ENCODE measurements at regions of chr11 and their contacts with region 1.

Region 1: GRCh38 chr11:727859-728748 is 19.2 kb upstream of the TALDO1 start:
- DNase-seq: peak; percentile 52 to 86 (median 71)
- ATAC-seq: peak; percentile 93
- H3K4me3 ChIP-seq: no peak overlapping the region
- H3K4me3 Mint-ChIP-seq: no peak overlapping the region
- H3K27ac ChIP-seq: no peak overlapping the region
- H3K27ac Mint-ChIP-seq: no peak overlapping the region
- H3K4me1 ChIP-seq: peaks cover 11 to 17% of the 10 kb centered on the region in 2 donors
- H3K4me1 Mint-ChIP-seq: peaks cover 4 to 11% (median 8%) of the 10 kb centered on the region in 7 donors
- H3K27me3 ChIP-seq: no peaks in the 10 kb centered on the region
- H3K27me3 Mint-ChIP-seq: peaks cover 0 to 8% (median 4%) of the 10 kb centered on the region in 5 donors

Region 2: GRCh38 chr11:406978-407739 is 320.9 kb before region 1 on chr11:
- CTCF ChIA-PET with region 1: no interaction called
- POLR2A ChIA-PET with region 1: no interaction called
- intact Hi-C with region 1: loop called in 1 of 2 experiments (anchors 5 kb)
- DNase-seq: peak; percentile 80 to 93 (median 92)
- ATAC-seq: peak; percentile 90
- H3K4me3 ChIP-seq: no peak overlapping the region
- H3K4me3 Mint-ChIP-seq: peak overlapping the region in 6 of 10 donors; percentile 12 to 60 (median 38)
- H3K27ac ChIP-seq: peak overlapping the region; percentile 75
- H3K27ac Mint-ChIP-seq: peak overlapping the region in 7 of 9 donors; percentile 21 to 85 (median 51)
- H3K4me1 ChIP-seq: peaks cover 9 to 13% of the 10 kb centered on the region in 2 donors
- H3K4me1 Mint-ChIP-seq: peaks cover 4 to 21% (median 6%) of the 10 kb centered on the region in 7 donors
- H3K27me3 ChIP-seq: no peaks in the 10 kb centered on the region
- H3K27me3 Mint-ChIP-seq: no peaks in the 10 kb centered on the region

Region 3: GRCh38 chr11:554824-555472 is 173.2 kb before region 1 on chr11:
- CTCF ChIA-PET with region 1: interaction called, 41 read pairs
- POLR2A ChIA-PET with region 1: interaction called, 68 read pairs
- intact Hi-C with region 1: loop called (anchors 1 to 2 kb)
- DNase-seq: peak; percentile 60 to 80 (median 72)
- ATAC-seq: peak; percentile 89
- H3K4me3 ChIP-seq: peak overlapping the region; percentile 46
- H3K4me3 Mint-ChIP-seq: peak overlapping the region in 7 of 10 donors; percentile 36 to 69 (median 57)
- H3K27ac ChIP-seq: peak overlapping the region; percentile 44
- H3K27ac Mint-ChIP-seq: no peak overlapping the region
- H3K4me1 ChIP-seq: peaks cover 9 to 16% of the 10 kb centered on the region in 2 donors
- H3K4me1 Mint-ChIP-seq: peaks cover 3 to 8% (median 7%) of the 10 kb centered on the region in 7 donors
- H3K27me3 ChIP-seq: no peaks in the 10 kb centered on the region
- H3K27me3 Mint-ChIP-seq: peaks cover 0 to 18% (median 0%) of the 10 kb centered on the region in 5 donors

Region 4: DNA sequence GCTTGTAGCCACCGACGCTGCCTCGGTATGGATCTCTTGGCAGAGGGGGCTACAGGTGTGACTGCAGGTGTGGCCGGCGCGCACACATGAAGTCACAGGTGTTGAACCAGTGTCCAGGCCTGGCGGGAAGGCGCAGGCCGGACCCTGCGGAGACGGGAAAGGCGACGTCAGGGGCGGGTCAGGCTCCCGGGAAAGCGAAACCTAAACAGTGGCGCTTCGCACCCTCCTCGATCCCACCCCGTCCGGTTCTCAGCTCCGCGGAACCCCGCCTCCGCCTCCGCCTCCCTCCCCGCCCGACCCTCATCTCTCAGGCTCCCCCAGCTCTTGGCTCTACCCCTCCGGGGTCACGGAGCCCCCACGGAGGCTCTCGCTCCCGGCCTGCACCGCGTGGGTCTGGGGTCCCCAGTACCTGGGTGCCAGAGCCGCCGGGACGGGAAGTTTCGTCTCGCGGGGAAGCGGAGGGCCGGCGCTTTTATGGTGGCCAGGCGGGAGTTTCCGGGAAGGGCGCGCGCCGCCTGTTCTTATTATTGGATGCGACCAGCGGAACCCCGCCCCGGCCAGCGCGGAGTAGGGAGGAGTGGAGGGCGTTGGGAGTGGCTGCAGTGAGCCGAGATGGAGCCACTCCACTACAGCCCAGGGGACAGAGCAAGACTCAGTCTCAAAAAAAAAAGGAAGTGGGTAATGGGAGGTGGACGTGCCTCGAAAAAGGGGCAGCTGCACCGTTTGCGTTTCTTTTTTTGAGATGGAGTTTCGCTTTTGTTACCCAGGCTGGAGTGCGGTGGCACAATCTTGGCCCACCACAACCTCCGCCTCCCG is 112.4 kb before region 1 on chr11 and contains the start of gene IRF7:
- CTCF ChIA-PET with region 1: no interaction called
- POLR2A ChIA-PET with region 1: interaction called, 3 read pairs
- intact Hi-C with region 1: loop called in 1 of 2 experiments (anchors 1 kb)
- DNase-seq: peak; percentile 70 to 91 (median 76)
- ATAC-seq: peak; percentile 91
- H3K4me3 ChIP-seq: peak within 1 kb of the TSS; percentile 97
- H3K4me3 Mint-ChIP-seq: peak within 1 kb of the TSS; percentile 80 to 94 (median 92)
- H3K27ac ChIP-seq: peak within 1 kb of the TSS; percentile 95
- H3K27ac Mint-ChIP-seq: peak within 1 kb of the TSS; percentile 83 to 97 (median 93)
- H3K4me1 ChIP-seq: peaks cover 8 to 22% of the 10 kb centered on the region in 2 donors
- H3K4me1 Mint-ChIP-seq: peaks cover 0 to 22% (median 15%) of the 10 kb centered on the region in 7 donors
- H3K27me3 ChIP-seq: no peaks in the 10 kb centered on the region
- H3K27me3 Mint-ChIP-seq: no peaks in the 10 kb centered on the region
- total RNA-seq, gene IRF7: 57.0 to 134 (median 64.6) TPM

Region 5: GRCh38 chr11:747158-748006 is 19.3 kb after region 1 on chr11 and contains the start of gene TALDO1:
- CTCF ChIA-PET with region 1: interaction called, 6 read pairs
- POLR2A ChIA-PET with region 1: interaction called, 21 read pairs
- intact Hi-C with region 1: loop called (anchors 1 kb)
- DNase-seq: peak; percentile 54 to 96 (median 60)
- ATAC-seq: peak; percentile 92
- H3K4me3 ChIP-seq: peak within 1 kb of the TSS; percentile 67
- H3K4me3 Mint-ChIP-seq: peak within 1 kb of the TSS; percentile 80 to 93 (median 88)
- H3K27ac ChIP-seq: peak within 1 kb of the TSS; percentile 80
- H3K27ac Mint-ChIP-seq: peak within 1 kb of the TSS; percentile 73 to 90 (median 83)
- H3K4me1 ChIP-seq: peaks cover 10% of the 10 kb centered on the region in 2 donors
- H3K4me1 Mint-ChIP-seq: peaks cover 5 to 28% (median 19%) of the 10 kb centered on the region in 7 donors
- H3K27me3 ChIP-seq: no peaks in the 10 kb centered on the region
- H3K27me3 Mint-ChIP-seq: no peaks in the 10 kb centered on the region
- total RNA-seq, gene TALDO1: 61.4 to 272 (median 90.3) TPM

Region 6: DNA sequence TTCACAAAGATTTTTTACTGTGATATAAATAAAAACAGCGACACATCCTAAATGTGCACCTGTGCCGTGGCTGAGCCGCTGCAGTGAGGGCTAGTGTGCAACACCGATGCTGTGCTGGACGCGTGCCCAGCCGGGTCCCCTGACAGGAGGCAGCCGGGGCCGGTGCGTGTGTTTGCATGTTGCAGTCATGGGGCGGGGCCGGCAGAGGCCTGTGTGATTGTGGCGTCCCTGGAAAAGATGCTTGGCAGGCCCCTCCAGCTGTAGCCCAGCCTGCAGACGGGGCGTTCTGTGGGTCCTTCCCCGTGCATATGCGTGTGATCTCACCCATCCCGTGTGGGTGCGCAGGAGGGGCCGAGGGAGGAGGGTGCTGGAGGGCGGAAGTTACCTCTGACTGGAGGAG is 277.8 kb after region 1 on chr11:
- CTCF ChIA-PET with region 1: no interaction called
- POLR2A ChIA-PET with region 1: no interaction called
- intact Hi-C with region 1: no loop called
- DNase-seq: no peak
- ATAC-seq: no peak
- H3K4me3 ChIP-seq: no peak overlapping the region
- H3K4me3 Mint-ChIP-seq: no peak overlapping the region
- H3K27ac ChIP-seq: no peak overlapping the region
- H3K27ac Mint-ChIP-seq: no peak overlapping the region
- H3K4me1 ChIP-seq: no peaks in the 10 kb centered on the region
- H3K4me1 Mint-ChIP-seq: peaks cover 0 to 11% (median 0%) of the 10 kb centered on the region in 7 donors
- H3K27me3 ChIP-seq: no peaks in the 10 kb centered on the region
- H3K27me3 Mint-ChIP-seq: no peaks in the 10 kb centered on the region

Region 7: GRCh38 chr11:1050581-1051355 is 322.7 kb after region 1 on chr11:
- CTCF ChIA-PET with region 1: no interaction called
- POLR2A ChIA-PET with region 1: no interaction called
- intact Hi-C with region 1: loop called in 1 of 2 experiments (anchors 5 kb)
- DNase-seq: peak; percentile 54 to 78 (median 68)
- ATAC-seq: peak; percentile 95
- H3K4me3 ChIP-seq: no peak overlapping the region
- H3K4me3 Mint-ChIP-seq: no peak overlapping the region
- H3K27ac ChIP-seq: no peak overlapping the region
- H3K27ac Mint-ChIP-seq: no peak overlapping the region
- H3K4me1 ChIP-seq: no peaks in the 10 kb centered on the region
- H3K4me1 Mint-ChIP-seq: peaks cover 0 to 5% (median 0%) of the 10 kb centered on the region in 7 donors
- H3K27me3 ChIP-seq: peaks cover 0 to 5% of the 10 kb centered on the region in 2 donors
- H3K27me3 Mint-ChIP-seq: peaks cover 0 to 11% (median 4%) of the 10 kb centered on the region in 5 donors